ENCODE measurements at regions of chr5 and their contacts with region 1.

Region 1: GRCh38 chr5:178551059-178551458 is 39.1 kb downstream of the COL23A1 start:
- DNase-seq: no peak
- H3K4me3 ChIP-seq: no peak overlapping the region
- H3K27ac ChIP-seq: no peak overlapping the region
- H3K4me1 ChIP-seq: peaks cover 20% of the 10 kb centered on the region
- H3K27me3 ChIP-seq: peaks cover 6% of the 10 kb centered on the region
- CTCF ChIP-seq: peak; percentile 61

Region 2: GRCh38 chr5:178279725-178280438 is 271.2 kb before region 1 on chr5:
- intact Hi-C with region 1: loop called (anchors 10 kb)
- DNase-seq: peak; percentile 87
- H3K4me3 ChIP-seq: no peak overlapping the region
- H3K27ac ChIP-seq: no peak overlapping the region
- H3K4me1 ChIP-seq: peaks cover 11% of the 10 kb centered on the region
- H3K27me3 ChIP-seq: peaks cover 24% of the 10 kb centered on the region
- CTCF ChIP-seq: peak; percentile 93

Region 3: DNA sequence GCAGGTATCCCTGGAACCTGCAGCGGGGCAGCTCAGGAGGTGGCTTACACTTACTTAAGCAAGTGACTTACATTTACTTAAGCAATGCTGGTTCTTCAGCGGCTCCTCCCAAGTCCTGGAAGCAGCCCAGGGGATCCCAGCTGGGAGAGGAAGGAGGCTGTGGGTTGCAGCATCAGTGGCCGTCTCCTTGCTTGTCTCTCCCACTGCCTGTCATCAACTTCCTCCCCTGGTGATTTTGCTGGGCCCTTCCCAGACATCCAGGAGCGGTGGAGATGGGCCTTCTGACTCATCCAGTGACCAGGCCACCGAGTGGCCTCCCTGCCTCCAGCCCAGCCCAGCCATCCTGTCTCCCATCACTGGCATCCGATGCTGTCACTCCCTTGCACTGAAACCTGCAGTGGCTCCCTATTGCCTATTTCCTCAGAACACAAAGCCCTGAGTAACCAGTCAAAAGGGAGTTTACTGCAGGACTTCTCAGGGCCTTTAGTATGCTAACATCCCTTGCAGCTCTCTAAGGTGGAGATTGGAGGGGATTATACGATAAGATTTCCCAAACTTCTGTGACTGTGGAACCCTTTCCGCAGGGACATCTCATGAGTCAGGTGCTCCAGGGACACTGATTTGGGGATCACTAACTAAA is 162.6 kb before region 1 on chr5:
- intact Hi-C with region 1: no loop called
- DNase-seq: peak; percentile 62
- H3K4me3 ChIP-seq: no peak overlapping the region
- H3K27ac ChIP-seq: no peak overlapping the region
- H3K4me1 ChIP-seq: peaks cover 29% of the 10 kb centered on the region
- H3K27me3 ChIP-seq: peaks cover 58% of the 10 kb centered on the region
- CTCF ChIP-seq: no peak

Measured in left ventricle myocardium inferior (tissue), 1 donor.